Vagina (tissue), 2 donors: ENCODE measurements at regions of chr9 and their contacts with region 1.

Region 1: GRCh38 chr9:35116898-35117551 is 1.4 kb upstream of the ATOSB start:
- DNase-seq: no peak
- H3K4me3 ChIP-seq: peak overlapping the region; percentile 43 to 51
- H3K27ac ChIP-seq: peak overlapping the region; percentile 95
- H3K4me1 ChIP-seq: peaks cover 41% of the 10 kb centered on the region
- H3K27me3 ChIP-seq: no peaks in the 10 kb centered on the region
- CTCF ChIP-seq: peak; percentile 78 to 94 (median 85)
- POLR2A ChIP-seq: no peak

Region 2: DNA sequence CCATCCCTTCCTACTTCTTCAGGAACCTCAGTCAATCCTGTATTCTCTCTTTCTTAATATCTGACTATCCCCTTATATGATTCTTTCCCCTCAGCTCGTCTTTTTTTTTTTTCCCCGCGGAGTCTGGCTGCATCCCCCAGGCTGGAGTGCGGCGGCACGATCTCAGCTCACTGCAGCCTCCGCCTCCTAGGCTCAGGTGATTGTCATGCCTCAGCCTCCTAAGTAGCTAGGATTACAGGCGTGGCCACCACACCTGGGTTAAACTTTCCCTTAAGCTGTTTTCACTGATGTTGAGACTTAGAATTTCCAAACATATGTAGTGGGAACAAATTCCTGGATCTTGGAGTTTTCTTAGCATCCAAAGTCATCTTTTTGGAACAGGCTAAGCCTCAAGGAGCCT is 359.6 kb after region 1 on chr9:
- intact Hi-C with region 1: loop called (anchors 5 kb)
- DNase-seq: no peak
- H3K4me3 ChIP-seq: no peak overlapping the region
- H3K27ac ChIP-seq: no peak overlapping the region
- H3K4me1 ChIP-seq: no peaks in the 10 kb centered on the region
- H3K27me3 ChIP-seq: no peaks in the 10 kb centered on the region
- CTCF ChIP-seq: no peak
- POLR2A ChIP-seq: no peak